Activated CD4-positive, alpha-beta memory T cell treated with anti-CD3 and anti-CD28 coated beads for 36 hours (primary cell): ENCODE measurements at regions of chr1 and their contacts with region 1.

Region 1: DNA sequence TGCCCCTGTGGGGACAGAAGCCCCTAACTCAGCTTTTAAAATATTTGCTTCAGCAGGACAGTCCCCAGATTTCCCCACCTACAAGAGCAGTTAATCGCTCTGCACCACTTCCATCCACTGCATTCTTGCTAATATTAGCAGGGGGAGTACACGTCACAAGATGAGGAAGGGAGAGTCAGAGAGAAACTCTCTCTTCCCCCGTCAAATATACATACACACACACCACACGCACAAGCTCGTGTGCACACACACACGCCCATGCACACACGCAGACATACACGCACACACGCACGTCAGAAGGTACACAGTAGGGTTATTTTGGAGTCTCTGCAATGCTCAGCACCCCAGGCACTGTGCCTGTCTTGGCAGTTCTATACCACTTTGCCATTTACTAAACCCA is 2.1 kb downstream of the CLCA1 start:
- DNase-seq: no peak
- H3K4me3 Mint-ChIP-seq: no peak overlapping the region
- H3K27ac Mint-ChIP-seq: no peak overlapping the region
- H3K4me1 Mint-ChIP-seq: no peaks in the 10 kb centered on the region
- H3K27me3 Mint-ChIP-seq: peaks cover 6% of the 10 kb centered on the region

Region 2: GRCh38 chr1:86419277-86419903 is 51.5 kb before region 1 on chr1:
- CTCF ChIA-PET with region 1: interaction called, 3 read pairs
- POLR2A ChIA-PET with region 1: no interaction called
- intact Hi-C with region 1: loop called (anchors 2 kb)
- DNase-seq: peak; percentile 53
- H3K4me3 Mint-ChIP-seq: no peak overlapping the region
- H3K27ac Mint-ChIP-seq: no peak overlapping the region
- H3K4me1 Mint-ChIP-seq: peaks cover 4% of the 10 kb centered on the region
- H3K27me3 Mint-ChIP-seq: peaks cover 1% of the 10 kb centered on the region

Region 3: GRCh38 chr1:86481966-86482365 is 11.1 kb after region 1 on chr1:
- CTCF ChIA-PET with region 1: interaction called, 10 read pairs
- POLR2A ChIA-PET with region 1: no interaction called
- intact Hi-C with region 1: no loop called
- DNase-seq: no peak
- H3K4me3 Mint-ChIP-seq: no peak overlapping the region
- H3K27ac Mint-ChIP-seq: no peak overlapping the region
- H3K4me1 Mint-ChIP-seq: no peaks in the 10 kb centered on the region
- H3K27me3 Mint-ChIP-seq: no peaks in the 10 kb centered on the region